HCT116 (cell line): ENCODE measurements at regions of chr7 and their contacts with region 1.

Region 1: DNA sequence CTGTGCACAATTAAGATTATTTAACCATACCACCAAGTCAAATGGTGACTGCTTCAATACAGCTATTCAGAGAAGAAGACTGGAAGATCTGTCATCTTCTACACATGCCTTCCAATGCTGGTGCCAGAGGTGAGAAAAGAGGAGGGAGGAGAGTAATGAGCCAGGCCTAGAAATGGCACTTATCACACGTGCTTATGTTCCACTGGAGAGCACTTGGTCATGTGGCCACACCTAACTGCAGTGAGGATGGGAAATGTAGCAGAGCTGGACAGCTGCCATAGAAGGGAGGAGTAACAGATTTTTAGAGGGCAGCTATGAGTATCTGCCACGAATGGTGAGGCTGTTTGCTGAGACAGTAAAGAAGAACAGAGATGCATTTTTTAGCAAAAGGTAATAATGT is 77.1 kb downstream of the MPLKIP start:
- DNase-seq: no peak
- ATAC-seq: no peak
- H3K4me3 ChIP-seq: no peak overlapping the region
- H3K27ac ChIP-seq: no peak overlapping the region
- H3K4me1 ChIP-seq: no peaks in the 10 kb centered on the region
- H3K27me3 ChIP-seq: no peaks in the 10 kb centered on the region
- CTCF ChIP-seq: no peak
- POLR2A ChIP-seq: no peak
- RAD21 ChIP-seq: no peak

Region 2: GRCh38 chr7:39386718-39387117 is 670.6 kb before region 1 on chr7:
- CTCF ChIA-PET with region 1: no interaction called
- POLR2A ChIA-PET with region 1: no interaction called
- RAD21 ChIA-PET with region 1: no interaction called
- intact Hi-C with region 1: no loop called
- DNase-seq: no peak
- ATAC-seq: no peak
- H3K4me3 ChIP-seq: no peak overlapping the region
- H3K27ac ChIP-seq: no peak overlapping the region
- H3K4me1 ChIP-seq: no peaks in the 10 kb centered on the region
- H3K27me3 ChIP-seq: peaks cover 53% of the 10 kb centered on the region
- CTCF ChIP-seq: peak in 2 of 3 experiments; percentile 27 to 32; a peak in 3 of 6 replicates
- POLR2A ChIP-seq: no peak
- RAD21 ChIP-seq: no peak

Region 3: GRCh38 chr7:39580149-39580874 is 477.0 kb before region 1 on chr7:
- CTCF ChIA-PET with region 1: interaction called, 14 read pairs
- POLR2A ChIA-PET with region 1: interaction called, 3 read pairs
- RAD21 ChIA-PET with region 1: no interaction called
- intact Hi-C with region 1: loop called (anchors 5 kb)
- DNase-seq: peak; percentile 87
- ATAC-seq: peak; percentile 93
- H3K4me3 ChIP-seq: no peak overlapping the region
- H3K27ac ChIP-seq: no peak overlapping the region
- H3K4me1 ChIP-seq: peaks cover 0 to 5% of the 10 kb centered on the region in 2 experiments; a peak in 1 of 4 replicates
- H3K27me3 ChIP-seq: no peaks in the 10 kb centered on the region
- CTCF ChIP-seq: peak; percentile 73 to 90 (median 85)
- POLR2A ChIP-seq: no peak
- RAD21 ChIP-seq: peak; percentile 96